MCF 10A (cell line): ENCODE measurements at regions of chr19 and their contacts with region 1.

Region 1: GRCh38 chr19:262125-262524 is 29.1 kb downstream of the PLPP2 start:
- DNase-seq: no peak
- H3K4me3 Mint-ChIP-seq: no peak overlapping the region
- H3K27ac Mint-ChIP-seq: no peak overlapping the region
- H3K4me1 Mint-ChIP-seq: peaks cover 10% of the 10 kb centered on the region
- H3K27me3 Mint-ChIP-seq: peaks cover 42% of the 10 kb centered on the region
- CTCF ChIP-seq: no peak

Region 2: DNA sequence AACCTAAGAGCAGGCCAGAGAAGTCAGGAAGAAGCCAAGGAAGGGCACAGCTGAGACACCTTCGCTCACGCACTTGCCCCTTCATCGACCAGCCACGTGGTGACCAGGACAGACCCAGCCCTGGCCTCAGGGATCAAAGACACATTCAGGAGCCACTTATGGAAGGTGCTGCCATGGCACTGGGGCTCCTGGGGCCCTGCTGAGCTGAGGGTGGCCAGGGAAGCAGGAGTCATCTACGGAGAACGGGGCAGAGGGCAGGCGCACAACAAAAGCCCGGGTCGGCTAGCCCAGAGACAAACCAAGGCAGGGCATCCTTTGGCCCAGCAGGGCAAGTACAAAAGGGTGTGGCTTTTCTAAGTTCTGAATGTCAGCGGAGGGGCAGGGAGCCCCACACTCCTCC is 26.8 kb after region 1 on chr19:
- CTCF ChIA-PET with region 1: interaction called, 11 read pairs
- POLR2A ChIA-PET with region 1: no interaction called
- intact Hi-C with region 1: no loop called
- DNase-seq: no peak
- H3K4me3 Mint-ChIP-seq: no peak overlapping the region
- H3K27ac Mint-ChIP-seq: no peak overlapping the region
- H3K4me1 Mint-ChIP-seq: peaks cover 8% of the 10 kb centered on the region
- H3K27me3 Mint-ChIP-seq: peaks cover 16% of the 10 kb centered on the region
- CTCF ChIP-seq: no peak

Region 3: GRCh38 chr19:306151-306900 is 44.2 kb after region 1 on chr19:
- CTCF ChIA-PET with region 1: no interaction called
- POLR2A ChIA-PET with region 1: no interaction called
- intact Hi-C with region 1: no loop called
- DNase-seq: no peak
- H3K4me3 Mint-ChIP-seq: no peak overlapping the region
- H3K27ac Mint-ChIP-seq: no peak overlapping the region
- H3K4me1 Mint-ChIP-seq: no peaks in the 10 kb centered on the region
- H3K27me3 Mint-ChIP-seq: no peaks in the 10 kb centered on the region
- CTCF ChIP-seq: no peak